ENCODE measurements at regions of chr13 and their contacts with region 1.

Region 1: DNA sequence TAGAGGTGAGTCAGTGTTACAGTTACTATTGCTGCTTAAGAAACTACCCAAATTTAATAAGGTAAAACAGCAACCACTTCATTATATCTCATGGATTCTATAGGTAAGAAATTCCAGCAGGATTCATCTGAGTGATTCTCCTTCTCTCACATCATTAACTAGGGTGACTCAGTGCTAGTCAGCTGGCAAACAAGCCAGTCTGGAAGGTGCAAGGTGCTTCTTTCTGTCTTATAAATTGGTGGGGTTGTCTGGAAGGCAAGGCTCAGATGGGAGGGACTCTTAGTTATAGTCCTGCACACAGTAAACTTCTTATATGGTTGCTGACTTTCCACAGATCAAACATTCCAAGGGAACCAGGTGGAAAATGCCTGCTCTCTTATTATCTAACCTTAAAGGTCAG is 484.5 kb downstream of the GPC5 start:
- DNase-seq: no peak
- H3K4me3 ChIP-seq: no peak overlapping the region
- H3K4me3 Mint-ChIP-seq: no peak overlapping the region
- H3K27ac Mint-ChIP-seq: no peak overlapping the region
- H3K4me1 ChIP-seq: no peaks in the 10 kb centered on the region
- H3K4me1 Mint-ChIP-seq: no peaks in the 10 kb centered on the region
- H3K27me3 ChIP-seq: no peaks in the 10 kb centered on the region
- H3K27me3 Mint-ChIP-seq: no peaks in the 10 kb centered on the region
- CTCF ChIP-seq: no peak

Region 2: GRCh38 chr13:91369441-91369831 is 513.5 kb before region 1 on chr13:
- CTCF ChIA-PET with region 1: no interaction called
- POLR2A ChIA-PET with region 1: no interaction called
- intact Hi-C with region 1: no loop called
- DNase-seq: no peak
- H3K4me3 ChIP-seq: no peak overlapping the region
- H3K4me3 Mint-ChIP-seq: no peak overlapping the region
- H3K27ac Mint-ChIP-seq: no peak overlapping the region
- H3K4me1 ChIP-seq: 0 out of 2 replicates have a peak, but pooled peaks cover 3% of the 10 kb centered on the region
- H3K4me1 Mint-ChIP-seq: no peaks in the 10 kb centered on the region
- H3K27me3 ChIP-seq: no peaks in the 10 kb centered on the region
- H3K27me3 Mint-ChIP-seq: no peaks in the 10 kb centered on the region
- CTCF ChIP-seq: no peak

Region 3: GRCh38 chr13:91714855-91715254 is 168.1 kb before region 1 on chr13:
- CTCF ChIA-PET with region 1: no interaction called
- POLR2A ChIA-PET with region 1: no interaction called
- intact Hi-C with region 1: no loop called
- DNase-seq: no peak
- H3K4me3 ChIP-seq: no peak overlapping the region
- H3K4me3 Mint-ChIP-seq: no peak overlapping the region
- H3K27ac Mint-ChIP-seq: no peak overlapping the region
- H3K4me1 ChIP-seq: peaks cover 3% of the 10 kb centered on the region; the same call in 1 of the 2 replicates
- H3K4me1 Mint-ChIP-seq: no peaks in the 10 kb centered on the region
- H3K27me3 ChIP-seq: no peaks in the 10 kb centered on the region
- H3K27me3 Mint-ChIP-seq: no peaks in the 10 kb centered on the region
- CTCF ChIP-seq: no peak

Region 4: DNA sequence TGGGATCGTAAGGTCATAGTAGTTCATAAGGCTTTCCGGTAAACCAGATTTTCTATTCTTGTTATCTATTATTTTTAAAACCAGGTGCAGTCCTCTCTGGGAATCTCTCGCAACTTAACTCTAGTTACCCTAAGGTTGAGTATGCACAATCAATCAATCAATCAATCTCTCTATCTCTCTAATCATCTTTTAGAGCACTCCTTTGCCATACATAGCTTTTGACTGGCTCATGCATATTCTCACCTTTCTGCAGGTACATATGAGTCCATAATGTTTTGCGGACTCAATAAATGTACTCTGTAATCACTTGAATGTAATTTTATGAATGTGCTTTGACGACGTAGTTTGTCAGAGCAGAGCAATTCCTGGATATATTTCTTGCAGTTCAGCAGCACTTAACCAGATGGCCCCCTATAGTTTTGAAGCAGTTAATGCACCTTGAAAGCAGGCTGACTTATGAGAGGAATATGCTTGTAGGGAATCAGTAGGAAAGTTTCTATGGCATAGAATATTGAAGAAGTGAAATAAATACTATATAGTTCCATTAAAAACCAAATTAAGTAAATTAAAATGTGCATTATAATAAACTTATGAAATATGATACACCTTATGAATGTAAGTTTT is 40.2 kb after region 1 on chr13:
- CTCF ChIA-PET with region 1: no interaction called
- POLR2A ChIA-PET with region 1: no interaction called
- intact Hi-C with region 1: loop called (anchors 2 kb)
- DNase-seq: no peak
- H3K4me3 ChIP-seq: no peak overlapping the region
- H3K4me3 Mint-ChIP-seq: no peak overlapping the region
- H3K27ac Mint-ChIP-seq: no peak overlapping the region
- H3K4me1 ChIP-seq: no peaks in the 10 kb centered on the region
- H3K4me1 Mint-ChIP-seq: no peaks in the 10 kb centered on the region
- H3K27me3 ChIP-seq: no peaks in the 10 kb centered on the region
- H3K27me3 Mint-ChIP-seq: peaks cover 18% of the 10 kb centered on the region
- CTCF ChIP-seq: peak; percentile 42

Measured in Caco-2 (cell line).